CD8-positive, alpha-beta T cell (primary cell): ENCODE measurements at regions of chr16 and their contacts with region 1.

Region 1: DNA sequence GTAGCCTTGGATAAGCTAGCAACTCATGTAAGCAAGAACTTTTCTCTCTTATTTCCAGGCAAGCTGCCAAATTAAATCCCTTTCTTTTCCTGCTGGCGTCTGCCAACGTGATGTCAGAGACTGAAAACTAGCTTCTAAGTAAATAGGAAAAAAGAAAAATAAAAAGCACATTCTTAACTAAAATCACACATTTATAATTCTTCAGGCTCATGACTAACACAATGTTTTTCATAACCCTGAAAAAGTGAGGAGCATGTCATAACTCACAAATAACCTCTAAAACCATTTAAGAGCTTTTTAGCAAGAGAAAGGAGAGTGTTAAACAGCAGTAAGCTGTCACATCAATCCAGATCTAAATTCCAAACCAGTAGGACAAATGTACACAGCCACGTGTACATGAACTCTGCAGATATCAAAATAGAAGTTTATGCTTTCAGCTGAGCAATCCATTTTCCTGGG is 110.0 kb downstream of the N4BP1 start:
- DNase-seq: no peak
- ATAC-seq: no peak
- H3K4me3 ChIP-seq: no peak overlapping the region
- H3K4me3 Mint-ChIP-seq: no peak overlapping the region
- H3K27ac ChIP-seq: no peak overlapping the region
- H3K27ac Mint-ChIP-seq: no peak overlapping the region
- H3K4me1 ChIP-seq: no peaks in the 10 kb centered on the region
- H3K4me1 Mint-ChIP-seq: no peaks in the 10 kb centered on the region
- H3K27me3 ChIP-seq: no peaks in the 10 kb centered on the region
- H3K27me3 Mint-ChIP-seq: no peaks in the 10 kb centered on the region
- CTCF ChIP-seq: no peak

Region 2: GRCh38 chr16:48394826-48395774 is 104.9 kb before region 1 on chr16:
- CTCF ChIA-PET with region 1: no interaction called
- POLR2A ChIA-PET with region 1: no interaction called
- intact Hi-C with region 1: no loop called
- DNase-seq: no peak
- ATAC-seq: no peak
- H3K4me3 ChIP-seq: no peak overlapping the region
- H3K4me3 Mint-ChIP-seq: no peak overlapping the region
- H3K27ac ChIP-seq: no peak overlapping the region
- H3K27ac Mint-ChIP-seq: no peak overlapping the region
- H3K4me1 ChIP-seq: no peaks in the 10 kb centered on the region
- H3K4me1 Mint-ChIP-seq: no peaks in the 10 kb centered on the region
- H3K27me3 ChIP-seq: no peaks in the 10 kb centered on the region
- H3K27me3 Mint-ChIP-seq: no peaks in the 10 kb centered on the region
- CTCF ChIP-seq: no peak

Region 3: GRCh38 chr16:48556913-48557351 is 57.0 kb after region 1 on chr16:
- CTCF ChIA-PET with region 1: no interaction called
- POLR2A ChIA-PET with region 1: no interaction called
- intact Hi-C with region 1: loop called in 1 of 2 experiments (anchors 10 kb)
- DNase-seq: peak in 2 of 9 experiments; percentile 27 to 30
- ATAC-seq: peak; percentile 45
- H3K4me3 ChIP-seq: no peak overlapping the region
- H3K4me3 Mint-ChIP-seq: no peak overlapping the region
- H3K27ac ChIP-seq: no peak overlapping the region
- H3K27ac Mint-ChIP-seq: peak overlapping the region; percentile 38
- H3K4me1 ChIP-seq: peaks cover 47% of the 10 kb centered on the region
- H3K4me1 Mint-ChIP-seq: peaks cover 80% of the 10 kb centered on the region
- H3K27me3 ChIP-seq: no peaks in the 10 kb centered on the region
- H3K27me3 Mint-ChIP-seq: no peaks in the 10 kb centered on the region
- CTCF ChIP-seq: no peak